ENCODE measurements at regions of chr2 and their contacts with region 1.

Region 1: DNA sequence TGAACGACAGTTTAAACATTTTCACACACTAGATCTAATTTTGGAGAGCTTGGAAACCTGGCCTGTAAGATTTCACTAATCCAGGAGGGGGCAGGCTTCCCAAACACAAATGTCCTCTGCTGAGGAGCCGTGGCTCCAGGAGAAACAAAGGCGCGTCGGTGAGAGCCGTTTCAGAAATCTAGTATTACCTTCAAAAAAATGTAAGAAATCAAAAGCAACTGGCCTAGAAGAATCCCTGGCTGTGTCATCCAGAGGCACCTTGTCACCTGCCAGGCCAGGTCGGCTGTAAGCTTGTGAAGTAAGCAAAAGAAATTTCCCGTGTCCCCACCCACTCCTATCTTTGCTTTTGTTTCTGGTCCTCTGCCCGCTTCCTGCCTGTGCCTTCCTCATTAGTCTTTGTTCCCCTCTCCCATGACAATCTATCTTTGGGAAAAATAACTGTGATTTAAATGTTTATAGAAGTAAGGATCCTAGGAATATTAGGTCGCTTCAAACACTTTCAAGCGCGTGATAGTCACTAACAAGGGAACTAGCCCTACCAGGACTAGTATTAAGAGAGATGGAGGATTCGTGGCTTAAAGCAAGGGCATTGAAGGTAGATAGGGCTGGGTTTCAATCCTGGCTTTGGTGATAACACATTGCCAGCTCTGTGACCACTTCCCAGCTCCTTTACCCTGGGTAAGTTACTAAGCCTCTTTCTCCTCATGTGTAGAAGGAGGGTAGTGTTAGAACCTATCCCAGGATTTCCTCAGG is 99.5 kb upstream of the STK39 start:
- DNase-seq: peak; percentile 62 to 86 (median 80)
- H3K4me3 ChIP-seq: peak overlapping the region in 6 of 7 experiments; percentile 63 to 83 (median 70)
- H3K27ac ChIP-seq: no peak overlapping the region
- H3K4me1 ChIP-seq: peaks cover 0 to 12% (median 2%) of the 10 kb centered on the region in 4 experiments
- H3K27me3 ChIP-seq: no peaks in the 10 kb centered on the region

Region 2: GRCh38 chr2:167856190-167856589 is 490.7 kb before region 1 on chr2:
- CTCF ChIA-PET with region 1: no interaction called
- POLR2A ChIA-PET with region 1: no interaction called
- DNase-seq: no peak
- H3K4me3 ChIP-seq: no peak overlapping the region
- H3K27ac ChIP-seq: no peak overlapping the region
- H3K4me1 ChIP-seq: no peaks in the 10 kb centered on the region
- H3K27me3 ChIP-seq: no peaks in the 10 kb centered on the region

Region 3: GRCh38 chr2:168336864-168337263 is 10.0 kb before region 1 on chr2:
- CTCF ChIA-PET with region 1: interaction called, 21 read pairs
- POLR2A ChIA-PET with region 1: no interaction called
- DNase-seq: peak in 1 of 3 donors; percentile 20
- H3K4me3 ChIP-seq: no peak overlapping the region
- H3K27ac ChIP-seq: no peak overlapping the region
- H3K4me1 ChIP-seq: no peaks in the 10 kb centered on the region
- H3K27me3 ChIP-seq: no peaks in the 10 kb centered on the region

Region 4: DNA sequence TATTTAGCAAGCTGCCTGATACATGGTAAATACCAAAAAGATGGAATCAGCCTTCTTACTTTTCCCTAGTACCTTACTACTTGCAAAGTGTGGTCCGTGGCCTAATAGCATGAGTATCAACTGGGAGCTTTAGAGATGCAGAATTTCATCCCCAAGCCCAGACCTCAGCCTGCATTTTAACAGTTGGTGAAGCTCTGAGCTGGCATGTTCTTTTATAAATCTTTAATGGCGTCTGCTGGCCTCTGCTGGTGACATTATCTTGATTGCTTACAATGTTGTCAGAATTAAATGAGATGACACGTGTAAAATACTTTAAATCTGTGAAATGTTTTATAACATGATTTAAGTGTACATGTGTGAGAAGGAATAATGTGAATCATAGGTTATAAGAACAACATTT is 340.4 kb after region 1 on chr2:
- CTCF ChIA-PET with region 1: interaction called, 96 read pairs
- POLR2A ChIA-PET with region 1: no interaction called
- DNase-seq: peak; percentile 54 to 73 (median 70)
- H3K4me3 ChIP-seq: no peak overlapping the region
- H3K27ac ChIP-seq: no peak overlapping the region
- H3K4me1 ChIP-seq: peaks cover 1 to 23% (median 10%) of the 10 kb centered on the region in 4 experiments
- H3K27me3 ChIP-seq: no peaks in the 10 kb centered on the region

Region 5: DNA sequence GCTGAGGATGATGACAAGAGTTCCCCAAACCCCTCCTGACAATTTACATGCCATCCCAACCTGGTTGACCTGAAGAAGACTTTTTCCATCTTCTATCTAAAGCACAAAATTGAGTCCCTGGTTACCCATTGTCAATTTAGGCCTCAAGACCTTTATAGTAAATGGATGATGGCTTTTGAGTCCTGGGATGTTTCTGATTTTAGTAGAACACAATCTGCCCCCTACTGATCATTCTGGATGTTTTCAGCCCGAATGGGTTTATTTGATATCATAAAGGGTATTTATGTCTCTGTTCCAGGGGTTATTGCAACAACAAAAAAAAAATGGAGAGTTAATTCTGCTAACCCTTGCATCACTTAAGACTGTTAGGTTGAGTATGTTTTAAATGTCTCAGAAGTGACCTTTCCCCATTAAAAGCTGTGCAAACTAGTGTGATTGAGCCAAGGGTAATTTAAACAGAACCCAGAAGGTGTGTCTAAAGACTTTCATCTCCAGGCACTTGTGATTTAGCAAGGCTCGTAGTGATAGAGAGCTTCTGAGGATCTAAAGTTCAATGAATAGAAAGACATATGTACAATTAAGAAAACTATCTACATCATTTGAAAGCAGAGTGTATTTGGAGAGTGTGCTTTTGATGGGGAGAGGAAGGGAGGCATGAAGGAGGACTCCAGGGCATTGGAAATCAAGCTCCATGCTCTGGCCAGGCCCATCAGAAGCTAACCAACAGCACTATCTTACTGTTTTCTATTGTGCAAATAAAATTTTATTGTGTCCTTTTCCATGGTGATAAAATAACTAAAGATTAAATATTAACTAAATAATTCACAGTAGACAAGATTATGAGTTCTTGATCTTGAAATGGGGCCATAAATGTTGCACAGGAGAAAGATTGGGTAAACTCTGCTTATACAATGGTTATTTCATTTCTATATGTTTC is 358.9 kb after region 1 on chr2:
- CTCF ChIA-PET with region 1: interaction called, 28 read pairs
- POLR2A ChIA-PET with region 1: no interaction called
- DNase-seq: peak; percentile 27 to 55 (median 53)
- H3K4me3 ChIP-seq: no peak overlapping the region
- H3K27ac ChIP-seq: no peak overlapping the region
- H3K4me1 ChIP-seq: no peaks in the 10 kb centered on the region
- H3K27me3 ChIP-seq: no peaks in the 10 kb centered on the region

Region 6: DNA sequence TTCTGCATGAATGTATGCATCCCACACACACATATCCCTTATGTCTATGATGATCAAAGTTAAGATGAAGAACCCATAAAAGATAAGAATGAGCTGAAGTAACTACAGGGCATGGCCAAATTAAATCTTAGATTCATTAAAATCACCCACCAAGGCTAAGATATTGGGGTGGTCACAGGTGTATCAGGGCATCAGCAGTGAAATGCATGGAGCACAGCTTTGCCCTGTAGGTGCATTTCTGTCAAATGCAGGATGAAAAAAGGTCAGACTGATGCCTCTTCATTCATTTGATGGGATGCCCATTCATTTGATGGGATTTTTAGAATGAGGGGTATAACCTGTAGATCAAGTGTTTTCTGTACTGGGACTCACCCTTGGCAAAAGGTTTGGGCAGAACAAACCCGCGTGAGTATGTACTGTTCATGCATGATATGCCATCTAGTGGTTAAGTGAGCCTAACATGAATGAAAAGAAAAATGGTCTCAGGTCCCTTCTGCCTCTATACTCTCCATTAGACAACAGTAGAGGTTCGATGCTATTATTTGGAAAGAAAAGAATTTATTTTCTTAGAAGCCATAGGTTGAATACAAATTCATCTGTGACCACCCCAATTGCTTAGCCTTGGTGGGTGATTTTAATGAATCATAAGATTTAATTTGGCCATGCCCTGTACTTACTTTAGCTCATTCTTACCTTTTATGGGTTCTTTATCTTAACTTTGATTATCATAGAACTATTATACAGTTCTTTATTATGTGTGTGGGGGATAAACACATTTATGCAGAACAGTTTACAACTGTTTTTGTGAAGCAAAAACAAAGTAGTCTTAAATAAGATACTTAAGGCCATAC is 412.3 kb after region 1 on chr2:
- CTCF ChIA-PET with region 1: interaction called, 10 read pairs
- POLR2A ChIA-PET with region 1: no interaction called
- DNase-seq: peak; percentile 60 to 72 (median 71)
- H3K4me3 ChIP-seq: no peak overlapping the region
- H3K27ac ChIP-seq: no peak overlapping the region
- H3K4me1 ChIP-seq: peaks cover 13 to 29% (median 16%) of the 10 kb centered on the region in 4 experiments
- H3K27me3 ChIP-seq: no peaks in the 10 kb centered on the region

Region 7: GRCh38 chr2:168816369-168816768 is 469.5 kb after region 1 on chr2:
- CTCF ChIA-PET with region 1: no interaction called
- POLR2A ChIA-PET with region 1: no interaction called
- DNase-seq: no peak
- H3K4me3 ChIP-seq: no peak overlapping the region
- H3K27ac ChIP-seq: no peak overlapping the region
- H3K4me1 ChIP-seq: no peaks in the 10 kb centered on the region
- H3K27me3 ChIP-seq: no peaks in the 10 kb centered on the region